ENCODE measurements at regions of chr1 and their contacts with region 1.

Region 1: GRCh38 chr1:16904560-16905111 is 8.9 kb downstream of the RNU1-2 start:
- DNase-seq: peak; percentile 98
- ATAC-seq: peak; percentile 89 to 98 (median 90)
- H3K4me3 ChIP-seq: peak overlapping the region; percentile 49
- H3K4me3 Mint-ChIP-seq: no peak overlapping the region
- H3K27ac ChIP-seq: peak overlapping the region; percentile 90
- H3K27ac Mint-ChIP-seq: no peak overlapping the region
- H3K4me1 ChIP-seq: peaks cover 17% of the 10 kb centered on the region
- H3K4me1 Mint-ChIP-seq: peaks cover 18 to 25% of the 10 kb centered on the region in 2 donors
- H3K27me3 ChIP-seq: no peaks in the 10 kb centered on the region
- H3K27me3 Mint-ChIP-seq: no peaks in the 10 kb centered on the region
- CTCF ChIP-seq: no peak

Region 2: DNA sequence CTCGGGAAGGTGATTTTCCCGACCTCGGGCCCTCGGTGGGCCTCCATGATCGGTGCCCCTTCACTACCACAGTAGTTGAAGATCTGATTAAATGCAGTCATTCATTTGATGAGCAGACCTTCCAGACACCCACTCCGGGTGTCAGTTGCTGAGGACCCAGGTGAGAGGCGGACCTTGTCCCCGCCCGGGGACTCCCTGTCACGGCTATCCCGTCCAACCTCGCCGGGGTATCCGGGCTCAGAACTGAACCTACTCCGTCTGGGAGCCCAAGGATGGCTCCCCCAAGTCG is 260.5 kb before region 1 on chr1:
- intact Hi-C with region 1: loop called (anchors 10 kb)
- DNase-seq: no peak
- ATAC-seq: peak in 1 of 3 donors; percentile 48
- H3K4me3 ChIP-seq: peak overlapping the region; percentile 71
- H3K4me3 Mint-ChIP-seq: no peak overlapping the region
- H3K27ac ChIP-seq: peak overlapping the region; percentile 72
- H3K27ac Mint-ChIP-seq: no peak overlapping the region
- H3K4me1 ChIP-seq: peaks cover 45% of the 10 kb centered on the region
- H3K4me1 Mint-ChIP-seq: no peaks in the 10 kb centered on the region
- H3K27me3 ChIP-seq: no peaks in the 10 kb centered on the region
- H3K27me3 Mint-ChIP-seq: no peaks in the 10 kb centered on the region
- CTCF ChIP-seq: no peak

Region 3: DNA sequence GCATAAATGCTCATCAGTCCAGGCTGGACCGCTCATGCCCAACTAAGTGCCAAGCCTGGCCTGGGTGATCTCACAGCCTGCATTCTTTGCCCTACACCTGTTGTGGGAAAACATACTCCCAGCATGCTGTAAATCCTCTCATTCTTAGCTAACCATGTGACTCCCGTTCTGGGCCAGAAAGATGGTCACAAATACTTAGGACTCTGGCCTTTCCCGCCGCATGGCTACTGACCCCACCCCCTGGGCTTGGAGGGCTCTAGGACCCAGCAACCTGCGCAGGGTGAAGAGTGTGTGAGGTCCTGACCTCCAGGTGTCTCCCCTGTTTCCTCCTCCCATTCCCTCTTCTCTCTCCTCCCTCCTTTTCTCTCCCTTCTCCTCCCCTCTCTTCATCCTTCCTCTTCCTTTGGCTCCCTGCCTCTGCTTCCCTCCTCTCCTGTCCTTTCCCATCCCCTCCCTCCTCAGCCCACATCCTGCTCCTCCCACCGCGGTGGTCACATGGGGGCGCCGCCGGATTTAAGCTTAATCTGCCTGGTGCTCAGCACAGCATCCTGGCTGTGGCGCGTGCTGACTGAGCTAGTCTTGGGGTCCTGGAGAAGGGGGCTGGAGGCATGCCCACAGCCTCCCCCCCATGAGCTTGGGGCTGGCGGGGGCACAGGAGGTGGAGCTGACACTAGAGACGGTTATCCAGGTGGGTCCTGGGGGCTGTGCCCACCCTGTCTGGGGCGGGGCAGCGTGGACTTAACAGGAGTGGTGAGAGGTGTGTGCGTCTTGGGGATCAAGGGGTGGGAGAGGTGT is 17.0 kb after region 1 on chr1 and contains the start of gene CROCC:
- intact Hi-C with region 1: no loop called
- DNase-seq: peak; percentile 42 to 58
- ATAC-seq: peak; percentile 47 to 86 (median 84)
- H3K4me3 ChIP-seq: peak within 1 kb of the TSS; percentile 8
- H3K4me3 Mint-ChIP-seq: peak within 1 kb of the TSS; percentile 83
- H3K27ac ChIP-seq: no peak within 1 kb of the TSS
- H3K27ac Mint-ChIP-seq: peak within 1 kb of the TSS in 1 of 2 donors; percentile 78
- H3K4me1 ChIP-seq: peaks cover 14% of the 10 kb centered on the region
- H3K4me1 Mint-ChIP-seq: peaks cover 19 to 31% of the 10 kb centered on the region in 2 donors
- H3K27me3 ChIP-seq: no peaks in the 10 kb centered on the region
- H3K27me3 Mint-ChIP-seq: no peaks in the 10 kb centered on the region
- CTCF ChIP-seq: no peak
- total RNA-seq, gene CROCC: 51.7 to 62.9 (median 59.1) TPM

Region 4: GRCh38 chr1:17053685-17054410 is 149.2 kb after region 1 on chr1 and contains the start of gene SDHB:
- intact Hi-C with region 1: loop called (anchors 5 kb)
- DNase-seq: peak; percentile 99
- ATAC-seq: peak; percentile 96 to 99 (median 97)
- H3K4me3 ChIP-seq: peak within 1 kb of the TSS; percentile 68
- H3K4me3 Mint-ChIP-seq: peak within 1 kb of the TSS; percentile 99
- H3K27ac ChIP-seq: peak within 1 kb of the TSS; percentile 76
- H3K27ac Mint-ChIP-seq: peak within 1 kb of the TSS; percentile 97 to 98
- H3K4me1 ChIP-seq: peaks cover 12% of the 10 kb centered on the region
- H3K4me1 Mint-ChIP-seq: peaks cover 7 to 22% of the 10 kb centered on the region in 2 donors
- H3K27me3 ChIP-seq: no peaks in the 10 kb centered on the region
- H3K27me3 Mint-ChIP-seq: peaks cover 5 to 7% of the 10 kb centered on the region in 2 donors
- CTCF ChIP-seq: no peak
- total RNA-seq, gene SDHB: 56.8 to 62.6 (median 59.5) TPM

Region 5: GRCh38 chr1:17148950-17149608 is 244.4 kb after region 1 on chr1:
- intact Hi-C with region 1: no loop called
- DNase-seq: no peak
- ATAC-seq: no peak
- H3K4me3 ChIP-seq: no peak overlapping the region
- H3K4me3 Mint-ChIP-seq: no peak overlapping the region
- H3K27ac ChIP-seq: no peak overlapping the region
- H3K27ac Mint-ChIP-seq: no peak overlapping the region
- H3K4me1 ChIP-seq: no peaks in the 10 kb centered on the region
- H3K4me1 Mint-ChIP-seq: no peaks in the 10 kb centered on the region
- H3K27me3 ChIP-seq: peaks cover 2% of the 10 kb centered on the region
- H3K27me3 Mint-ChIP-seq: peaks cover 25 to 28% of the 10 kb centered on the region in 2 donors
- CTCF ChIP-seq: no peak

Measured in natural killer cell (primary cell).